Upper lobe of right lung (tissue), 1 donor: ENCODE measurements at regions of chr19 and their contacts with region 1.

Region 1: GRCh38 chr19:35013031-35013819 is 13.1 kb downstream of the GRAMD1A start:
- DNase-seq: peak; percentile 89
- ATAC-seq: peak; percentile 87
- H3K4me3 ChIP-seq: no peak overlapping the region
- H3K27ac ChIP-seq: peak overlapping the region; percentile 36
- H3K4me1 ChIP-seq: peaks cover 44% of the 10 kb centered on the region
- H3K27me3 ChIP-seq: no peaks in the 10 kb centered on the region
- CTCF ChIP-seq: peak; percentile 98

Region 2: GRCh38 chr19:34974646-34975045 is 38.6 kb before region 1 on chr19:
- intact Hi-C with region 1: loop called (anchors 5 kb)
- DNase-seq: no peak
- ATAC-seq: no peak
- H3K4me3 ChIP-seq: no peak overlapping the region
- H3K27ac ChIP-seq: no peak overlapping the region
- H3K4me1 ChIP-seq: peaks cover 20% of the 10 kb centered on the region
- H3K27me3 ChIP-seq: no peaks in the 10 kb centered on the region
- CTCF ChIP-seq: no peak

Region 3: GRCh38 chr19:35076657-35077056 is 63.4 kb after region 1 on chr19:
- intact Hi-C with region 1: no loop called
- DNase-seq: no peak
- ATAC-seq: no peak
- H3K4me3 ChIP-seq: no peak overlapping the region
- H3K27ac ChIP-seq: no peak overlapping the region
- H3K4me1 ChIP-seq: no peaks in the 10 kb centered on the region
- H3K27me3 ChIP-seq: no peaks in the 10 kb centered on the region
- CTCF ChIP-seq: no peak